Motor neuron (in vitro differentiated cells): ENCODE measurements at regions of chr5 and their contacts with region 1.

Region 1: DNA sequence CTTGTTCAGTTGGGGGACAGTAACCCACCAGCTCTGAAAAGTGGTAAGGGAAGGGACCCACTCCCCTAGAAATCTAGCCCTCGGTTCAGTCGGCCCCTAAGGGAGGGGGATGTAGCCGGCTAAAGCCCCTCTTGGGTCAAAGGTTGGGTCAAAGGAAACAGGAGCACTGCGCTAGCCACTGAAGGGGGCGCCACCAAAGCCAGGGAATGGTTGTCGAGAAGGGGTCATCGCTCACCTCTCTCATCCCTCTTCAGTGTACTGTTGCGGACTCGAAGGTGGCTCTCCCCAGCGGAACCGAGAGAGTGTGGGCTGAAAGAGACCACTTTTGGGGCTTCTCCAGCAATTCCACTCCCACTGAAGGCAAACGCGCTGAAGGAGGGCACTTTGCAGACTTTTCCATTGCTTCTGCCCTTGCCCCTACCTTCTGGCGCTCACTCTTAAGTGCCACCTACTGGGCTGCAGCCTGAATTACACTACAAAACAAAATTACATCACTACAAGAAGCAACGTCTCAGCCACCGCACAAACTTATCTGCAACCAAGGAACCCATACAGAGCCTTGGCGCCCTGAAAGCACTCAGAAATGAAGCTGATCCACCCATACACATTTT is 396.9 kb downstream of the PDE4D start:
- ATAC-seq: no peak
- H3K4me3 ChIP-seq: no peak overlapping the region
- H3K27ac ChIP-seq: no peak overlapping the region
- H3K4me1 ChIP-seq: peaks cover 0 to 5% of the 10 kb centered on the region in 2 donors

Region 2: GRCh38 chr5:59390074-59390659 is 106.5 kb before region 1 on chr5:
- in situ Hi-C with region 1: loop called in 1 of 9 experiments (anchors 10 kb)
- ATAC-seq: no peak
- H3K4me3 ChIP-seq: no peak overlapping the region
- H3K27ac ChIP-seq: no peak overlapping the region
- H3K4me1 ChIP-seq: no peaks in the 10 kb centered on the region

Region 3: GRCh38 chr5:59575648-59576445 is 79.2 kb after region 1 on chr5:
- in situ Hi-C with region 1: no loop called
- ATAC-seq: no peak
- H3K4me3 ChIP-seq: no peak overlapping the region
- H3K27ac ChIP-seq: no peak overlapping the region
- H3K4me1 ChIP-seq: peaks cover 18 to 20% of the 10 kb centered on the region in 2 donors

Region 4: GRCh38 chr5:59712836-59713497 is 216.3 kb after region 1 on chr5:
- in situ Hi-C with region 1: no loop called
- ATAC-seq: no peak
- H3K4me3 ChIP-seq: no peak overlapping the region
- H3K27ac ChIP-seq: no peak overlapping the region
- H3K4me1 ChIP-seq: peaks cover 6 to 18% of the 10 kb centered on the region in 2 donors